Panc1 (cell line): ENCODE measurements at regions of chr15 and their contacts with region 1.

Region 1: GRCh38 chr15:66765478-66766281 is 63.6 kb downstream of the SMAD6 start:
- DNase-seq: no peak
- ATAC-seq: peak; percentile 62
- H3K4me3 ChIP-seq: no peak overlapping the region
- H3K27ac ChIP-seq: peak overlapping the region; percentile 90
- H3K4me1 ChIP-seq: peaks cover 96% of the 10 kb centered on the region
- H3K27me3 ChIP-seq: no peaks in the 10 kb centered on the region
- CTCF ChIP-seq: no peak

Region 2: GRCh38 chr15:66789029-66790025 is 23.6 kb after region 1 on chr15:
- CTCF ChIA-PET with region 1: interaction called, 14 read pairs
- POLR2A ChIA-PET with region 1: no interaction called
- in situ Hi-C with region 1: no loop called
- intact Hi-C with region 1: no loop called
- DNase-seq: no peak
- ATAC-seq: peak; percentile 86
- H3K4me3 ChIP-seq: no peak overlapping the region
- H3K27ac ChIP-seq: peak overlapping the region; percentile 71
- H3K4me1 ChIP-seq: peaks cover 35% of the 10 kb centered on the region
- H3K27me3 ChIP-seq: no peaks in the 10 kb centered on the region
- CTCF ChIP-seq: no peak; the same call in 1 of the 2 replicates

Region 3: GRCh38 chr15:67850995-67851571 is 1085.4 kb after region 1 on chr15:
- CTCF ChIA-PET with region 1: no interaction called
- POLR2A ChIA-PET with region 1: no interaction called
- in situ Hi-C with region 1: no loop called
- intact Hi-C with region 1: no loop called
- DNase-seq: no peak
- ATAC-seq: peak; percentile 37; the same call in 1 of the 2 replicates
- H3K4me3 ChIP-seq: no peak overlapping the region
- H3K27ac ChIP-seq: peak overlapping the region; percentile 45; the same call in 1 of the 2 replicates
- H3K4me1 ChIP-seq: peaks cover 18% of the 10 kb centered on the region
- H3K27me3 ChIP-seq: no peaks in the 10 kb centered on the region
- CTCF ChIP-seq: no peak